RWPE1 (cell line): ENCODE measurements at regions of chr6 and their contacts with region 1.

Region 1: DNA sequence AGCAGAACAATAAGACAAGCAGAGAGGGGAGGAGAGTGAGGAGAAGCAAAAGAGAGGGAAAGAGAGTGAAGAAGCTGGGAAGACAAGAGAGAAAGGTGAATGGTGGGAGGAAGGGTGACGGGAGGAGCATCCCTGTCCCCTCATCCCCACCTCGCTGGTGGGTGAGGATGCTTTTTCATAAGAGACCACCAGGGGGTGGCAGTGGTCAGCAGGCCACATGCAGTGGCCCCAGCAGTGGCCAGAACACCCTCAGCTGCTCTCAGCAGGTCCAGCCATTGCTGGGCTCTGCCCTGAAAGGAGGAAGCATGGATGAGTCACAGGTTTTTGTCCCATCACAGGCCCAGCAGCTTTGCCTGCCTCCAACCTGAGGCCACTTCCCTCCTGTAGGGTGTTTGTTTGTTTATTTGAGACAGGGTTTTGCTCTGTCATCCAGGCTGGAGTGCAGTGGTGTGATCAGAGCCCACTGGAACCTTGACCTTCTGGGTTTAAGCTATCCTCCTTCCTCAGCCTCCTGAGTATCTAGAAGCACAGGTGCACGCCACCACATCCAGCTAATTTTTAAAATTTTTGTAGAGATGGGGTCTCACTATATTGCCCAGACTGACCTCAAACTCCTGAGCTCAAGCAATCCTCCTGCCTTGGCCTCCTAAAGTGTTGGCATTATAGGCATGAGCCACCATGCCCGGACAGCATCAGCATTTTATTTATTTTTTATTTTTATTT is 24.0 kb downstream of the FGD2 start:
- DNase-seq: no peak
- H3K27ac ChIP-seq: peak overlapping the region; percentile 11; the same call in 1 of the 2 replicates
- CTCF ChIP-seq: peak; percentile 24; the same call in 1 of the 2 replicates

Region 2: DNA sequence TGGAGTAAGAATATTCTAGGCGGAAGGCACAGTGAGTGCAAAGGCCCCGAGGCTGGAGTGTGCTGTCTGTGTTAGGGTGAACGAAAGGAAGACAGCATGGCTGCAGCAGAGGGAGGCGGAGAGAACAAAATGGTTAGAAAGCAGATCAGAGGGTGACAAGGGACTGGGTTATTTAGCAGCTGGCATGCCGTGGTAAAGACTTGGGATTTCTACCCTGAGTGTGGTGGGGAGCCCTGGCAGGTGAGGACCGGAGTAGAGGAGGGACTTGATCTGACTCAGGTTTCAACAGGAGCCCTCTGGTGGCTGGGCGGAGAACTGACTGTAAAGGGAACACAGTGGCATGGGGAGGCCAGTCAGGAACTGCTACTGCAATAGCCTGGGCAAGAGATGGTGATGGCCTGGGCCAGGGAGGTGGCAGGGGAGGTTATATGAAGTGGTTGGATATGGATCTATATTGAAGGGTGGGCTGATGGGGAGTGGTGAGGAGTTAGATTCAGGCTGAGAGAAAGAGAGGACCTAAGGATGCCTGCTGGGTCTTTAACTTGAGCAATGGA is 178.6 kb after region 1 on chr6:
- CTCF ChIA-PET with region 1: interaction called, 15 read pairs
- POLR2A ChIA-PET with region 1: no interaction called
- DNase-seq: peak; percentile 71
- H3K27ac ChIP-seq: no peak overlapping the region
- CTCF ChIP-seq: peak; percentile 76